Sigmoid colon (tissue), 7 donors: ENCODE measurements at regions of chr11 and their contacts with region 1.

Region 1: DNA sequence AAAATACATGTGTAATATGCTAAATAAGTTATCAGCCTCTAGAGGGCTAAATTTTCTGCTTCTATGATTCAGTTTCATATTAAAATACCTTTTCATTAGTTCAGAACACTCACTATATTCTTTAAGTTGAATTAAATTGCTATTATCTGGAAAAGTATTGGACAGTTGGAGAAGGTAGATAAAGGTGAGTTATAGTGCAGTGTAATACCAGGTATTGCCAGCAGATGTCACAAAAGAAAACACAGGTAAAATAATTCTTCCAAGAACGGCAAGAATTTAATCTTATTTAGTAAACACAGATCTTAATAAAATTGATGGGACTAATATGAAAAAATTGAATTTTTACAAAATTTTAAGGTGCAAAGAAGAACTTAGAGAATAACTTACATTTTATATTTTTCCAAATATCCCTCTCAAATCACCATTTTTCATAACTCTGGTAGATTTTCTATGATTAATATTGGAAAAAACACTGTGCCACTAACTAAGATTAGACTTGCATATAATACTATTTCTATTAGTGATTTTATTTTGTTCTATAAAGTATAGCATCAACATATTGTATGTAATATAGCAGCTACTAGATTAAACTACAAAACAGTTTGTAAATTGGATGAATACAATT is 1.7 kb upstream of the LRRC4C start:
- DNase-seq: no peak
- H3K4me3 ChIP-seq: no peak overlapping the region
- H3K27ac ChIP-seq: no peak overlapping the region
- H3K4me1 ChIP-seq: peaks cover 0 to 12% (median 4%) of the 10 kb centered on the region in 4 donors
- H3K27me3 ChIP-seq: peaks cover 0 to 37% (median 0%) of the 10 kb centered on the region in 3 donors
- CTCF ChIP-seq: peak in 3 of 4 experiments; percentile 28 to 58 (median 50)
- EP300 ChIP-seq: no peak
- POLR2A ChIP-seq: no peak

Region 2: GRCh38 chr11:42524534-42525227 is 1063.5 kb after region 1 on chr11:
- intact Hi-C with region 1: loop called (anchors 5 kb)
- DNase-seq: peak; percentile 55
- H3K4me3 ChIP-seq: no peak overlapping the region
- H3K27ac ChIP-seq: no peak overlapping the region
- H3K4me1 ChIP-seq: no peaks in the 10 kb centered on the region
- H3K27me3 ChIP-seq: no peaks in the 10 kb centered on the region
- CTCF ChIP-seq: peak; percentile 23 to 67 (median 45)
- EP300 ChIP-seq: no peak
- POLR2A ChIP-seq: no peak